ENCODE measurements at regions of chr22 and their contacts with region 1.

Region 1: GRCh38 chr22:35150183-35151107 is 84.5 kb downstream of the ISX start:
- DNase-seq: peak; percentile 81
- H3K4me3 Mint-ChIP-seq: no peak overlapping the region
- H3K27ac Mint-ChIP-seq: no peak overlapping the region
- H3K4me1 Mint-ChIP-seq: no peaks in the 10 kb centered on the region
- H3K27me3 Mint-ChIP-seq: peaks cover 76% of the 10 kb centered on the region
- CTCF ChIP-seq: peak; percentile 85

Region 2: DNA sequence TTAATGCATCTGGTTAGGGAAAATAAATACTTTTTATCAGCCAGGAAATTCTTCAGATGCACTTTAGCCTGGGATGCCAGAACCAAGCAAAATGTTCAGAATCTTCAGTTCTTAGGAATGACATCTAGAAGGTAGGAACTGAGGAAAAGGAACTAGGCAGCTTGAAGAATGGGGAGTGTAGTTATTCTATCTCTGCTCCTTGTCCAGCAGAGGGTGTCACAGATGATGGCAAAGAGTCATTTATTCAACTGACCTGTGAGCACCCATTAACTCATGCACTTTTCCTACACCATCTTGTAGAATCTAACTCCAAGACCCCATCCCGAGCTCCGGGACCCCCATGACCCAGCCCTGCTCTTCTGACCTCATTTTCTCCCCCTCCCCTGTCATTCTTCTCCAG is 206.6 kb before region 1 on chr22:
- CTCF ChIA-PET with region 1: interaction called, 13 read pairs
- intact Hi-C with region 1: loop called (anchors 5 kb)
- DNase-seq: no peak
- H3K4me3 Mint-ChIP-seq: no peak overlapping the region
- H3K27ac Mint-ChIP-seq: no peak overlapping the region
- H3K4me1 Mint-ChIP-seq: no peaks in the 10 kb centered on the region
- H3K27me3 Mint-ChIP-seq: peaks cover 16% of the 10 kb centered on the region
- CTCF ChIP-seq: no peak

Region 3: GRCh38 chr22:35023692-35024363 is 126.6 kb before region 1 on chr22:
- CTCF ChIA-PET with region 1: interaction called, 10 read pairs
- intact Hi-C with region 1: loop called (anchors 5 kb)
- DNase-seq: peak; percentile 87
- H3K4me3 Mint-ChIP-seq: no peak overlapping the region
- H3K27ac Mint-ChIP-seq: no peak overlapping the region
- H3K4me1 Mint-ChIP-seq: peaks cover 8% of the 10 kb centered on the region
- H3K27me3 Mint-ChIP-seq: peaks cover 33% of the 10 kb centered on the region
- CTCF ChIP-seq: peak; percentile 91

Region 4: DNA sequence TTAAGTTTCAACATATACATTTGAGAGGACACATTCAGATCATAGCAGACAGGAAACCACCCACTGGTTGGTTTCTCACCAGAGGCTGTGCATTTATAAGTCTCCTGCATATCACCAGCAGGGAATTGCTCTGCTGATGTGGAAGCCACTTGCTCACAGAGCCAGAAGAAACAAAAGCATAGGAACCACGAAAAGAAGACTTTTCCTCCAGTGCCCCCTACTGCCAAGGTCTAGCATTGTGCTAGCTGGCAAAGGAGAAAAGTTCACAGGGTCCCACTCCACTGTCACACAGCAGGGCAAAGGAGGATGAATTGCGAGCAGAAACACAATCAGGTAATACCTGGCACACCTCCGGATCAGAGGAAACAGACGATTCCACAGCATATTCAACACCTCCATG is 113.4 kb before region 1 on chr22:
- CTCF ChIA-PET with region 1: interaction called, 8 read pairs
- intact Hi-C with region 1: loop called (anchors 5 kb)
- DNase-seq: no peak
- H3K4me3 Mint-ChIP-seq: no peak overlapping the region
- H3K27ac Mint-ChIP-seq: no peak overlapping the region
- H3K4me1 Mint-ChIP-seq: no peaks in the 10 kb centered on the region
- H3K27me3 Mint-ChIP-seq: peaks cover 19% of the 10 kb centered on the region
- CTCF ChIP-seq: no peak

Region 5: DNA sequence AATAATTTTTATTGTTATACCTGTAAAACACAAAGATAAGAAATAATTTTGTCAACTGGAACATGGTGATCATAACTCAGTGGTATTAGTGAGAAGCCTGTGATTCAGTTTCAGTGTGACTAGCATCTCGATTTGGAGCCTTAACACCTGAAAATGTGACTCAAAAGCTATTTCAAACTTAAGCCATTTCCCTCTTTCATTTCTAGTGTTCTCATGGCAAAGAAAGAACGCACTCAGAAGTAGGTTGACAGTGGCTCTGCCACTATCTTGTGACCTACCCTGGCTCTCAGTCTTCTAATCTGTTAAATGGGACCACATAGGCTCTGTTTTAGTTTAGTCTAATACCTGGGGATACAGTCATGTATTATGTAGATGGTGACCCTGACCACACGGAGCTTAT is 21.8 kb before region 1 on chr22:
- CTCF ChIA-PET with region 1: no interaction called
- intact Hi-C with region 1: no loop called
- DNase-seq: no peak
- H3K4me3 Mint-ChIP-seq: no peak overlapping the region
- H3K27ac Mint-ChIP-seq: no peak overlapping the region
- H3K4me1 Mint-ChIP-seq: no peaks in the 10 kb centered on the region
- H3K27me3 Mint-ChIP-seq: peaks cover 77% of the 10 kb centered on the region
- CTCF ChIP-seq: no peak

Region 6: GRCh38 chr22:35231585-35232084 is 81.2 kb after region 1 on chr22:
- CTCF ChIA-PET with region 1: interaction called, 20 read pairs
- intact Hi-C with region 1: loop called (anchors 2 kb)
- DNase-seq: peak; percentile 82
- H3K4me3 Mint-ChIP-seq: no peak overlapping the region
- H3K27ac Mint-ChIP-seq: no peak overlapping the region
- H3K4me1 Mint-ChIP-seq: no peaks in the 10 kb centered on the region
- H3K27me3 Mint-ChIP-seq: peaks cover 77% of the 10 kb centered on the region
- CTCF ChIP-seq: peak; percentile 96

Measured in Calu3 (cell line).